ENCODE measurements at regions of chr12 and their contacts with region 1.

Region 1: GRCh38 chr12:47079468-47079980 is at the starts of genes AMIGO2 and PCED1B:
- DNase-seq: peak; percentile 80
- ATAC-seq: peak; percentile 48
- H3K4me3 ChIP-seq: peak within 1 kb of the TSS; percentile 82
- H3K27ac ChIP-seq: peak within 1 kb of the TSS; percentile 85
- H3K4me1 ChIP-seq: peaks cover 66% of the 10 kb centered on the region
- H3K27me3 ChIP-seq: no peaks in the 10 kb centered on the region
- CTCF ChIP-seq: peak; percentile 59
- total RNA-seq, gene AMIGO2: 19.3 and 22.2 TPM in 2 replicates
- total RNA-seq, gene PCED1B: 1.0 TPM in 1 of 2 replicates, not detected in the other

Region 2: DNA sequence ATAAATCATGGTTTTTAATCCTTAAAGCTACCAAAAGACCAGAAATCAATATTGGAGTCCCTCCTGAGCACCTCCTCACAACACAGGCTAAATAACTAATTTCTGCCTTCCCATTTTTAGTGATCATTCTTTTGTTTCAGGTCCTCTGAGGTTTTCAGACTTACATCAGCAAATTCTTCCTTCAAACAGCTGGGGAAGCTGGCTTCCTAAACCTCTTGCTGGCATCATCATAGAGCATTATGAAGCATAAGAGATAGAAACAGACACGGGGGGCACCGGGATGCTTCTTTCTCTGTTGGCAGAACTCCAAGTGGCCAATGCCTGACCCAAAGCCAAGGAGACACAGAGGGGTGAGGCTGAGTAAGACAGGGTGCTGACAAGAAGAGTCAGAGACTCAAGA is 1980.8 kb before region 1 on chr12:
- CTCF ChIA-PET with region 1: no interaction called
- POLR2A ChIA-PET with region 1: no interaction called
- intact Hi-C with region 1: no loop called
- DNase-seq: no peak
- ATAC-seq: no peak
- H3K4me3 ChIP-seq: no peak overlapping the region
- H3K27ac ChIP-seq: no peak overlapping the region
- H3K4me1 ChIP-seq: no peaks in the 10 kb centered on the region
- H3K27me3 ChIP-seq: peaks cover 40% of the 10 kb centered on the region
- CTCF ChIP-seq: no peak

Region 3: DNA sequence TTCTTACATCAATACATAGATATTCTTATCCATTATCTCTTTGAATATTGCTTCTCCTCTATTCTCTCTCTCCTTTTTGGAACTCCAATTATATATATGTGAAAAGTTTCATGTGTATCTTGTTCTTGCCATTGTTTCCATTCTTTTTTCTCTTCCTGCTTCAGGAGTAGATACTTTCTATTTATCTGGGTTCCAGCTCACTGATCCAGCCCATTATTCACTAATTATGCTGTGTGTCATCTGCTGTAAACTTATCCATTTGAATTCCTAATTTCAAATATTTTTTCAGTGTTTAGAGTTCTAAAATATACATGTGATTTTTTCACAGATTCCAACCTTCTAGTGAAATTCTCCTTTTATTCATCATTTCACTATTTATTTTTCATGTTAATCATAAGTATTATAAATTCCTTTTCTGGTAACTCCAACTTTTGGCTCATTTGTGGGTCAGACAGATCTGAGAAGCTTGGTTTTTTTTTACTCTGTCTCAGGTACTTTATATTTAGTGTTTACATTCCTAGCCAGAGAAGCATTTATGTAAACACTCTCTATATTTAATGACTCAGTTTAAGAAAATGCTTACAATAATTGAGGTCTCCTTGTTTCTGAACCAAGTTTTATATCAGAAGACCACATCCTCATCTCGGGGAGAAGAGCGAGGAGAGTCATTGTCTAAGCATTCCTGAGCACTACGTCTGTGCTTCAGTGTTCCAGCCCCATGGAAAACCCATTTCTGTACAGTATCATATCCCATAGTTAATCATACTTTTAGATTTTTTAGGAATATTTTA is 16.1 kb after region 1 on chr12:
- CTCF ChIA-PET with region 1: no interaction called
- POLR2A ChIA-PET with region 1: interaction called, 13 read pairs
- intact Hi-C with region 1: loop called (anchors 2 kb)
- DNase-seq: peak; percentile 92
- ATAC-seq: peak; percentile 87
- H3K4me3 ChIP-seq: peak overlapping the region; percentile 36
- H3K27ac ChIP-seq: peak overlapping the region; percentile 61
- H3K4me1 ChIP-seq: peaks cover 54% of the 10 kb centered on the region
- H3K27me3 ChIP-seq: no peaks in the 10 kb centered on the region
- CTCF ChIP-seq: no peak

Region 4: DNA sequence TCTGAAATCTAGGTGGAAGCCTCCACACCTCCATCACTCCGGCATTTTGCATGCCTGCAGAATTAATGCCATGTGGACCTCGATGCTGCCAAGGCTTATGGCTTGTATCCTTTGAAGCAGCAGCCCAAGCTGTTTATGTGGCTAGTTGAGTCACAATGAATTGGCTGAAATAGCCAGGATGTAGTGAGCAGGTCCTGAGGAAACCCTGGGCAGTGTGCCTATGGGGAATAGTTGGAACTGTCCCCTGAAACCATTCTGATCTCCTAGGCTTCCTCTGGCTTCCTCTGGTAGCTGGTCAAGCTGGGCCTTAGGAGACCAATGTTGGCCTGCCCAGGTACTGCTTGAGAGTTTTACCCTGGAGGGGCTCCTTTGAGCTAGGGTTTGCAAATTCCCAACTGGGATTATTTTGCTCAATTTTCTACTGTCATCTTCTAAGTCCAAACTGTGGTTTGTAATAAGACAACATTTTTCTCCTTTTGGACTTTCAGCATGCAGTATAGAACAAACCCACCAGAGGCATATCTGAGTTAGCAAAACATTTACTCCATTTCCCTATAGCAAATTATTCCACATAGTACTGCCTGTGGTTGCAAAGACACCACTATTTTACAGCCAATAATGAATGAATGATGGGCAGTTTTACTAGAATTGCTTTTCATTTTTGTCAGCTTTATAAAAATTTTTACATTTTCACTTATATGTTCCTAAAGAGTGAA is 85.4 kb after region 1 on chr12:
- CTCF ChIA-PET with region 1: no interaction called
- POLR2A ChIA-PET with region 1: no interaction called
- intact Hi-C with region 1: loop called (anchors 5 kb)
- DNase-seq: peak; percentile 21
- ATAC-seq: no peak; the same call in 1 of the 2 replicates
- H3K4me3 ChIP-seq: no peak overlapping the region
- H3K27ac ChIP-seq: no peak overlapping the region
- H3K4me1 ChIP-seq: no peaks in the 10 kb centered on the region
- H3K27me3 ChIP-seq: no peaks in the 10 kb centered on the region
- CTCF ChIP-seq: 0 out of 2 replicates have a peak, but pooled peaks have one; percentile 27

Region 5: DNA sequence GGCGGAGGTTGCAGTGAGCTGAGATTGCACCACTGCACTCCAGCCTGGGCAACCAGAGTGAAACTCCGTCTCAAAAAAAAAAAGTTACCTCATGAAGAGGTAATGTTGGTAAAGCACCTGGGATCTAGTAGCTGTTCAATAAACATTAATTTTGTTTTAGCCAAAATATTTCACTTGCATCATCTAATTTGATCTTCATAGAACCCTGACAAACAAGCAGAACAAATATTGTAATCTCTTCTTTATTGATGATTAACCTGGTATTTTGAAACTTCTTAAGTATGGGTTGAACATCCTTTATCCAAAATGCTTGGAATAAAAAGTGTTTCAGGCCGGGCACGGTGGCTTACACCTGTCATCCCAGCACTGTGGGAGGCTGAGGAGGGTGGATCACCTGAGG is 149.3 kb after region 1 on chr12:
- CTCF ChIA-PET with region 1: no interaction called
- POLR2A ChIA-PET with region 1: interaction called, 16 read pairs
- intact Hi-C with region 1: no loop called
- DNase-seq: no peak
- ATAC-seq: no peak
- H3K4me3 ChIP-seq: no peak overlapping the region
- H3K27ac ChIP-seq: no peak overlapping the region
- H3K4me1 ChIP-seq: peaks cover 3% of the 10 kb centered on the region
- H3K27me3 ChIP-seq: no peaks in the 10 kb centered on the region
- CTCF ChIP-seq: no peak

Region 6: DNA sequence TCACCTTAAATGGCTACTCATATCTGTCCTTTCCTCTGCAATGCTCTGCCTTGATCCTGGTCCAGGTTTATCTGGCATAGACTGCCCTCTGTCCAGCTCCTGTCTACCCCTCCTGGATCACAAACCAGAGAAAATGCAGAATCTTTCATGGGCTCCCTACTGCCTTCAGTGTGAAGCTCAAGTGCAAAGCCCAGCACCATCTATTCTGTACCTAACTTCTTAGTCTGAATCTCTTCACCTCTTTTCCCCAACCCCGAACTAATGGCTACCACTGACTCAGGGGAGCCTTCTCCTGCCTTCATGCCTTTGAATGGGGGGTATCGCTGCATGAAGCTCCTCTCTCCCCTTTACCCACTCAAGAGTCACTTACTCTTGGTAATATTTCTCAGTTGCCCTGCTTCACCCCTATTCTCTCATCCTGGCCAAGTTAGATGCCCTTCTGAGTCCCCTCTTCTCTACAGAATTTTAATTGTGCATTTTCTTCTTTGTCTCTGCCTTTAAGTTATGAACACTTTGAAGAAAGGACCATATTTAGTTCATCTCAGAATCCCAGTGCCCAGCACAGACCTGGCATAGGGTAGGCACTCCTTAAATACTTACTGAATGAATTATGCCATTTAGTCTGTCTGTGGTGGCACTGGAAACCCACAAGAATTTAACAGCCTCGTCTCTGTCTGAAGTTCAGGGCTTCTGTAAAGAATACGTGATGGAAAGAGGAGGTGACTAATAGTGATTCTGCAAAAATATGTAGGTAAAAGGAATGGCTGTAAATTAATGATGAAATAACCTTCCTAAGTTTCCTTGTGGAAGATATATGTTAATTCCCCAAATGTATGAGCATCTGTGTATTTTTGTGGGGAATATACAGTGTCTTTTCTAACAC is 191.5 kb after region 1 on chr12:
- CTCF ChIA-PET with region 1: no interaction called
- POLR2A ChIA-PET with region 1: interaction called, 3 read pairs
- intact Hi-C with region 1: loop called (anchors 2 kb)
- DNase-seq: peak; percentile 98
- ATAC-seq: peak; percentile 98
- H3K4me3 ChIP-seq: no peak overlapping the region
- H3K27ac ChIP-seq: peak overlapping the region; percentile 97
- H3K4me1 ChIP-seq: peaks cover 67% of the 10 kb centered on the region
- H3K27me3 ChIP-seq: no peaks in the 10 kb centered on the region
- CTCF ChIP-seq: no peak

Region 7: GRCh38 chr12:47307680-47308399 is 228.3 kb after region 1 on chr12:
- CTCF ChIA-PET with region 1: interaction called, 3 read pairs
- POLR2A ChIA-PET with region 1: interaction called, 4 read pairs
- intact Hi-C with region 1: loop called (anchors 2 kb)
- DNase-seq: peak; percentile 84
- ATAC-seq: peak; percentile 100
- H3K4me3 ChIP-seq: no peak overlapping the region
- H3K27ac ChIP-seq: no peak overlapping the region
- H3K4me1 ChIP-seq: peaks cover 8% of the 10 kb centered on the region; the same call in 1 of the 2 replicates
- H3K27me3 ChIP-seq: no peaks in the 10 kb centered on the region
- CTCF ChIP-seq: peak; percentile 94